PC-9 (cell line): ENCODE measurements at regions of chr4 and their contacts with region 1.

Region 1: GRCh38 chr4:15805583-15806517 is 27.7 kb downstream of the CD38 start:
- DNase-seq: peak; percentile 28 to 59
- H3K4me3 ChIP-seq: no peak overlapping the region
- H3K27ac ChIP-seq: no peak overlapping the region
- H3K4me1 ChIP-seq: no peaks in the 10 kb centered on the region
- H3K27me3 ChIP-seq: no peaks in the 10 kb centered on the region
- CTCF ChIP-seq: peak; percentile 78

Region 2: GRCh38 chr4:15479089-15479912 is 326.5 kb before region 1 on chr4:
- CTCF ChIA-PET with region 1: no interaction called
- POLR2A ChIA-PET with region 1: no interaction called
- intact Hi-C with region 1: loop called (anchors 1 kb)
- DNase-seq: peak; percentile 35 to 50
- H3K4me3 ChIP-seq: no peak overlapping the region; the same call in 1 of the 2 replicates
- H3K27ac ChIP-seq: no peak overlapping the region
- H3K4me1 ChIP-seq: no peaks in the 10 kb centered on the region
- H3K27me3 ChIP-seq: no peaks in the 10 kb centered on the region
- CTCF ChIP-seq: peak; percentile 70; the same call in 1 of the 2 replicates

Region 3: DNA sequence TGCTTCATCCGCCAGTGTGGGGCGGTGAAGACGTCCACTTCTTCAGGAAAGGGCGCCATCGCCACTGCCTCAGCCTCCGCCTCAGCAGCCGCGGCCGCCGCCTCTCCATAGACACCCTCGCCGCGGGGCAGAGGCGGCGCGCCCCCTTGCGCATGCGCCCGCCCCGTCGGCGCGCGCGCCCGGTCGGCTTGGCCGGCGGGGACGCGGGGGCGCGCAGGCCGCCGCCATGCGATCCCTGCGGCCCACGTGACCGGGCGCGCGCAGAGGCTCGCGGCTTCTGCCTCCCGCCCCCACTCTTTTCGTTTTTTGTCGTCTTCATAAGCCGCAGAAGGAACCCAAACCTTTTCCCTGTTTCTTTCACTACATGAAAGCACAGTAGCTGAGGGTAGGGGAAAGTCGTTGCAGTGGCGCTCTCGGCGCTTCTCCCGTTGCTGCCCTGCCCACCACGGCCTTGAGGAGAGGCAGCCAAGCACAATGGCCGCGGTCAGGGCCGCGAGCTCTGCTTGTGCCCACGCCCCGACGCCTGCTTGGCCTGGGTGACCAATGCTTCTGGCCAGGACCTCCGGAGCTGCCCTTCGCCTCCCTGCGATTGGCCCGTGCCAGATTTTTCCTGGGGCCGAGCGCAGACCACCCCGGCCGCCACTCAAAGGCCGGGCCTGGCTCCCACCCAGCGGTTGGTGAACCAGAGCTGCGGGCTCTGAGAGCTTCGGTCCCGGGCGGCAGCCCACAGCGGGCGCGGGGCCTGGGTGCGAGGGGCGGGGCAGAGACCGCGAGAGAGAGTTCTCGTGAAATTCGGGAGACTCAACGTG is 150.4 kb before region 1 on chr4 and contains the start of gene FBXL5:
- CTCF ChIA-PET with region 1: no interaction called
- POLR2A ChIA-PET with region 1: no interaction called
- intact Hi-C with region 1: no loop called
- DNase-seq: peak; percentile 40 to 87
- H3K4me3 ChIP-seq: peak within 1 kb of the TSS; percentile 83
- H3K27ac ChIP-seq: peak within 1 kb of the TSS; percentile 80
- H3K4me1 ChIP-seq: peaks cover 34% of the 10 kb centered on the region
- H3K27me3 ChIP-seq: no peaks in the 10 kb centered on the region
- CTCF ChIP-seq: no peak
- total RNA-seq, gene FBXL5: 40.7 and 45.0 TPM in 2 replicates

Region 4: DNA sequence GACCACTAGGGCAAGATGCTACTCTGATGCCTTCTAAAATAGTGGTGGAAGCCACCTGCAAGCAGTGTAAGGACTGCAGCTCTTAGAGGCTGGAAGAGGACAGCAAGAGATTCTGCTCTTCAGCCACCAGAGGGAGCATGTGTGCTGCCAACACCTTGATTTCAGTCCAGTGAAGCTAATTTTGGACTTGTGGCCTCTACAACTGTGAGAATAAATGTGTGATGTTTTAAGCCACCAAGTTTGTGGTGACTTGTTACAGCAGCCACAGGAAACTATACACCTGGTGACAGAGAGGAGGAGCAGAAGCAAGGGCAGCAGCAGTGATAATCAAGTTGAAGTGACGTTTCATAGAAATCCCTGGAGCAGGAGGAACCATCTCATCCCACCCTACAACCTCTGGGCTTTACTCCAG is 76.8 kb after region 1 on chr4:
- CTCF ChIA-PET with region 1: interaction called, 16 read pairs
- POLR2A ChIA-PET with region 1: no interaction called
- intact Hi-C with region 1: loop called (anchors 1 kb)
- DNase-seq: peak; percentile 51 to 82
- H3K4me3 ChIP-seq: no peak overlapping the region
- H3K27ac ChIP-seq: 0 out of 2 replicates have a peak overlapping the region, but pooled peaks have one; percentile 7
- H3K4me1 ChIP-seq: no peaks in the 10 kb centered on the region
- H3K27me3 ChIP-seq: no peaks in the 10 kb centered on the region
- CTCF ChIP-seq: peak; percentile 93

Region 5: DNA sequence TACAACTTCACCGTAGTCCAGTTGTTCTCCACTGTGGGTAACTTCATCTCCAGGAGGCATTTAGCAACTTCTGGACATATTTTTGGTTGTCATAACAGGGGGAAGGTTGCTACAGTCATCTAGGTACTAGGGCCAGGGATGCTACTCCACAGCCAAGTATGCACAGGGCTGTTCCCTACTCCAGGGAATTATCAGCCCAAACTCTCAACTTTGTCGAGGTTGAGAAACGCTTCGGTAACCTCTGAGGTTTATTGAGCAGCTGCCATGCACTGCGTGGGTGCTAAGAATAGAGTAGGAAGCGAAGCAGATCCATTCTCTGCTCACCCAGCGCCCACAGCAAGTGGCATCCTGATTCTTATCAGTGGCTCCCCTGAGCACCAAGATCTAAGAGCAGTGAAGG is 124.5 kb after region 1 on chr4:
- CTCF ChIA-PET with region 1: no interaction called
- POLR2A ChIA-PET with region 1: no interaction called
- intact Hi-C with region 1: no loop called
- DNase-seq: no peak
- H3K4me3 ChIP-seq: no peak overlapping the region
- H3K27ac ChIP-seq: no peak overlapping the region
- H3K4me1 ChIP-seq: no peaks in the 10 kb centered on the region
- H3K27me3 ChIP-seq: no peaks in the 10 kb centered on the region
- CTCF ChIP-seq: no peak

Region 6: GRCh38 chr4:16001484-16001858 is 195.6 kb after region 1 on chr4:
- CTCF ChIA-PET with region 1: interaction called, 11 read pairs
- POLR2A ChIA-PET with region 1: no interaction called
- intact Hi-C with region 1: loop called (anchors 1 kb)
- DNase-seq: peak; percentile 51 to 65
- H3K4me3 ChIP-seq: no peak overlapping the region
- H3K27ac ChIP-seq: no peak overlapping the region
- H3K4me1 ChIP-seq: no peaks in the 10 kb centered on the region
- H3K27me3 ChIP-seq: no peaks in the 10 kb centered on the region
- CTCF ChIP-seq: peak; percentile 86

Region 7: GRCh38 chr4:16196478-16197393 is 390.9 kb after region 1 on chr4:
- CTCF ChIA-PET with region 1: interaction called, 4 read pairs
- POLR2A ChIA-PET with region 1: no interaction called
- intact Hi-C with region 1: loop called (anchors 2 kb)
- DNase-seq: peak; percentile 14 to 51
- H3K4me3 ChIP-seq: no peak overlapping the region
- H3K27ac ChIP-seq: no peak overlapping the region
- H3K4me1 ChIP-seq: no peaks in the 10 kb centered on the region
- H3K27me3 ChIP-seq: no peaks in the 10 kb centered on the region
- CTCF ChIP-seq: no peak

Region 8: GRCh38 chr4:16443504-16444088 is 637.7 kb after region 1 on chr4:
- CTCF ChIA-PET with region 1: no interaction called
- POLR2A ChIA-PET with region 1: no interaction called
- intact Hi-C with region 1: loop called (anchors 10 kb)
- DNase-seq: no peak
- H3K4me3 ChIP-seq: no peak overlapping the region
- H3K27ac ChIP-seq: no peak overlapping the region
- H3K4me1 ChIP-seq: no peaks in the 10 kb centered on the region
- H3K27me3 ChIP-seq: no peaks in the 10 kb centered on the region
- CTCF ChIP-seq: peak; percentile 65

Region 9: GRCh38 chr4:16524911-16525554 is 719.2 kb after region 1 on chr4:
- CTCF ChIA-PET with region 1: no interaction called
- POLR2A ChIA-PET with region 1: no interaction called
- intact Hi-C with region 1: no loop called
- DNase-seq: no peak
- H3K4me3 ChIP-seq: no peak overlapping the region
- H3K27ac ChIP-seq: no peak overlapping the region
- H3K4me1 ChIP-seq: no peaks in the 10 kb centered on the region
- H3K27me3 ChIP-seq: no peaks in the 10 kb centered on the region
- CTCF ChIP-seq: no peak

Region 10: DNA sequence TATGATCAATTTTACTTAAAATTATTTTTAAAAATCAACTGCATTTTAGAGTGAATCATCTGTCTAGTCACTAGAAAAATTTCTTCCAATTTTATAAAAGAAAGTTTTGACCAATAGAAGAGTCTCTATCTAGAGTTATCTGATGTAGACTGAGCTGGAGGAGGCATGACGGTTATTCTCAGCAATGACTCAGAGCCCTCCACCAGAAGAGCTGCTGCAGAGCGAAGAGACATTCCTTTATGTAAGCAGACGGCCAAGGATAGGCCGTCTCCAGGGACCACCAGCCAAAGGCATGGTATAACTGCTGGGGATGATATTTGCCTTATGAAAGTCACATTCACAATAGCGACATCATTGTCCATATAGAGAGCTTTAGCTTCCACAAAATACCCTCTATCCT is 1069.6 kb after region 1 on chr4:
- CTCF ChIA-PET with region 1: no interaction called
- POLR2A ChIA-PET with region 1: no interaction called
- intact Hi-C with region 1: no loop called
- DNase-seq: no peak
- H3K4me3 ChIP-seq: no peak overlapping the region
- H3K27ac ChIP-seq: no peak overlapping the region
- H3K4me1 ChIP-seq: no peaks in the 10 kb centered on the region
- H3K27me3 ChIP-seq: no peaks in the 10 kb centered on the region
- CTCF ChIP-seq: no peak